ENCODE measurements at regions of chr11 and their contacts with region 1.

Region 1: DNA sequence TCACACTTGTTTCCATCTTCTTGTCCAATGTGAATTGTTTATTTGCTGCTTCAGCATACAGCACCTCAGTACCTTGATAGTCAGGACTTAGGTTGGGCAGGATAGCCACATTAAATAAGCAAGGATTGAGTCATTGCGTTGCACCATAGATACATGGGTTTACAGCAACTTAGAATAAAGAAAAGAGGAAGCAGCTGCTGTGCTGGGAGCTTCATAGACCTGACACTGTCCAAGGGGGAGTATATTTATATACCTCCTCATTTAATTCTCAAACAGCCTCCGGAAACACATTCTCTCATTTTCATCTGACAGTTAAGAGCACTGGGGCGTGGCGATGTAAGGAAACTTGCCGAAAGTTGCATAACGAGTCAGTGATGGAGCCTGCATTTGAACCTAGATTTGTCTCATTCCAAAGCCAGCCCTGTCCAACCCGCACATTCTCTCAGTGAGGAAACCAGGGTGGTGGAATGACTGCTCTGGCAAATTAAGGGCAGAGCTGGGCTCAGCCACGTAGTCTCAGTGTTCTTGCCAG is 42.2 kb downstream of the UBASH3B start:
- DNase-seq: peak; percentile 48
- H3K4me3 Mint-ChIP-seq: peak overlapping the region; percentile 46
- H3K27ac Mint-ChIP-seq: peak overlapping the region; percentile 92
- H3K4me1 Mint-ChIP-seq: peaks cover 52% of the 10 kb centered on the region
- H3K27me3 Mint-ChIP-seq: no peaks in the 10 kb centered on the region

Region 2: DNA sequence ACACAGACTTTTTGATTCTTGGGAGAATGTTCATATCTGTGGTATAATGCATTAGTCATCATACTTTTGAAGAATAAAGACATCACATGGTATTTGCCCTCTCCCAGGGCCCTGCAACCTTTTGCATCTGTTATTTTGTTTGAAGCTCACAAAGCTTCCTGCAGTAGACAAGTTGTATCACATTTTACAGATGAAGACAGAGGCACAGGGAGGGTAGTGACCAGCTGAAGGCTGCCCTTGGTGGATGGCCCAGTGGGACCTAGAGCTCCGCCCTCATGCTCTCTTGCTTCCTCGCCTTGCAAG is 24.2 kb after region 1 on chr11:
- CTCF ChIA-PET with region 1: interaction called, 7 read pairs
- POLR2A ChIA-PET with region 1: interaction called, 25 read pairs
- DNase-seq: no peak
- H3K4me3 Mint-ChIP-seq: no peak overlapping the region
- H3K27ac Mint-ChIP-seq: peak overlapping the region; percentile 42
- H3K4me1 Mint-ChIP-seq: peaks cover 82% of the 10 kb centered on the region
- H3K27me3 Mint-ChIP-seq: peaks cover 5% of the 10 kb centered on the region

Region 3: DNA sequence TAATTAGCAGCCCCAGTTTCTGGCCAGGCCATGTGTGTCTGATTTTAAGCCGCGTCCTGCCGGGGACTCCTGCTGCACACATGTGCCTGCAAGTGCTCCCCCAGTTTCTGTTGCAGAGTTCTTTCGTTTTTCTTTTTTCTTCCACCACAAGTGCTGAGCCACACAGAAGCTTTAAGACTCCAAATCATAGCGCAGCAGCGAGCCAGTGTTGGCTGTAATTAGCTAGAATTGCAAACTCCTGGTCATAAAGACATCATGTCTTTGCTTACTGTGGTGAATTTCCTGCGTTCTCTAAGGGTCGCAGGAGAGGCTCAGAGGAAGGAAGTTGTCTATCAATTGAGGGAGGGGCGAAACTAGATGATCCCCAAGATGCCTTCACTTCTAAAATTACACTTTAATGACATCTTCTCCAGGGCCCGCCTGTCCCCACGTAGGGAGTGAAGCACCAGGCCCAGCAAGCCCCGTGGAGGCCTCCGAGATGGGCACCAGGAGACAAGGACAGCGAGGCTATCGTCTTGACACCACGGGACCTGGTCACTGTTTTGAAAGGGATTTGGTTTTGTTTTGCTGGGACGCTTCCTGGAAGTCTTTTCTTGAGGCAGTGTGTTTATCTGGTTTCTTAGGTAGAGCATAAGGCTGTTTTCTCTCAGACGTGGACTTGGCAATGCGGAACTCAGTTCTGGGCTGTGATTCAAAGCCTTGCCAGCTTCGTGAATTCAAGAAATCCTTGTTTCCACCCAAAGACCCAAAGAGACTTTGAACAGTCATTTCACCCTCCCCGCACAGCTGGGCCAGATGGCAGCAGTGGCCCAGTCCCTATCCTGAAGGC is 29.6 kb after region 1 on chr11:
- CTCF ChIA-PET with region 1: interaction called, 7 read pairs
- POLR2A ChIA-PET with region 1: interaction called, 25 read pairs
- DNase-seq: peak; percentile 59
- H3K4me3 Mint-ChIP-seq: peak overlapping the region; percentile 60
- H3K27ac Mint-ChIP-seq: peak overlapping the region; percentile 90
- H3K4me1 Mint-ChIP-seq: peaks cover 68% of the 10 kb centered on the region
- H3K27me3 Mint-ChIP-seq: no peaks in the 10 kb centered on the region

Region 4: GRCh38 chr11:122743949-122744348 is 46.2 kb after region 1 on chr11:
- CTCF ChIA-PET with region 1: interaction called, 7 read pairs
- POLR2A ChIA-PET with region 1: interaction called, 25 read pairs
- DNase-seq: peak; percentile 82
- H3K4me3 Mint-ChIP-seq: no peak overlapping the region
- H3K27ac Mint-ChIP-seq: no peak overlapping the region
- H3K4me1 Mint-ChIP-seq: peaks cover 1% of the 10 kb centered on the region
- H3K27me3 Mint-ChIP-seq: peaks cover 3% of the 10 kb centered on the region

Region 5: GRCh38 chr11:122749005-122749687 is 51.4 kb after region 1 on chr11:
- CTCF ChIA-PET with region 1: interaction called, 7 read pairs
- POLR2A ChIA-PET with region 1: interaction called, 25 read pairs
- DNase-seq: peak; percentile 79
- H3K4me3 Mint-ChIP-seq: peak overlapping the region; percentile 11
- H3K27ac Mint-ChIP-seq: peak overlapping the region; percentile 68
- H3K4me1 Mint-ChIP-seq: peaks cover 21% of the 10 kb centered on the region
- H3K27me3 Mint-ChIP-seq: no peaks in the 10 kb centered on the region